ENCODE measurements at regions of chr5 and their contacts with region 1.

Region 1: DNA sequence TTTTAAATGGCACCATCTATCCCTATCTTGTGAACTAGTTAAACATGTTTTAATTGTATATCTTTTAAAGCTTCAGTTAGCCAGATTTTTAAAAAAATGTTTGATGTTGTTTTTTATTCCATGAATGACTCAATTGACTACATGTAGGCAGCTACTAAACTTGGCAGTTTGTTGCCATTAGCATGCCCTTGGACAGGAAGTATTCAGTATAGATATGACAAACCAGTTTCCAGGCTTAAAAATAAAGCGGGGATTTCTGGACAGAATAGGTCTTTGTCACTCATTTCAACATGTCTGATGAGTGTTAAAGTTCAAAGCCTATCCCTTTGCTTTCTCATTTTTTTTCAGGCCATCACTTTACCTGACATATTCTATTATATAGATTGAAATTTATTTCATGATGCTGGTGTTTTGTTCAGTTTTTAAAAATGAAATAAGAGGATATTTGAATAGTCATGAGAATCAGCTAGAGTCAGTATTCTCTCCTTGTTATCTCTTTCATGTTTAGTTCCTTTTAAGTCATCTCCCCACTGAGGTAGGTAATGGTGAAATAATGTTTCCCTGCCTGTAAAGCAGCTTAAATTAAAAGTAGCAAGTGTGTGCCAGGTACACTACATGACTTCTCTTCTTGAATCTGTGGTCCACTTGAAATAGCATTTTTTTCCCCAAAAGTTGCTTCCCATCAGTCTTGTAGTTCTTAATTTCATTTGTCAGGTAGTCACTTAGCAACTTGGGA is 11.9 kb downstream of the TNFAIP8 start:
- DNase-seq: no peak
- ATAC-seq: peak; percentile 61
- H3K4me3 Mint-ChIP-seq: peak overlapping the region; percentile 40
- H3K27ac Mint-ChIP-seq: peak overlapping the region; percentile 88
- H3K4me1 Mint-ChIP-seq: peaks cover 83% of the 10 kb centered on the region
- H3K27me3 Mint-ChIP-seq: no peaks in the 10 kb centered on the region

Region 2: DNA sequence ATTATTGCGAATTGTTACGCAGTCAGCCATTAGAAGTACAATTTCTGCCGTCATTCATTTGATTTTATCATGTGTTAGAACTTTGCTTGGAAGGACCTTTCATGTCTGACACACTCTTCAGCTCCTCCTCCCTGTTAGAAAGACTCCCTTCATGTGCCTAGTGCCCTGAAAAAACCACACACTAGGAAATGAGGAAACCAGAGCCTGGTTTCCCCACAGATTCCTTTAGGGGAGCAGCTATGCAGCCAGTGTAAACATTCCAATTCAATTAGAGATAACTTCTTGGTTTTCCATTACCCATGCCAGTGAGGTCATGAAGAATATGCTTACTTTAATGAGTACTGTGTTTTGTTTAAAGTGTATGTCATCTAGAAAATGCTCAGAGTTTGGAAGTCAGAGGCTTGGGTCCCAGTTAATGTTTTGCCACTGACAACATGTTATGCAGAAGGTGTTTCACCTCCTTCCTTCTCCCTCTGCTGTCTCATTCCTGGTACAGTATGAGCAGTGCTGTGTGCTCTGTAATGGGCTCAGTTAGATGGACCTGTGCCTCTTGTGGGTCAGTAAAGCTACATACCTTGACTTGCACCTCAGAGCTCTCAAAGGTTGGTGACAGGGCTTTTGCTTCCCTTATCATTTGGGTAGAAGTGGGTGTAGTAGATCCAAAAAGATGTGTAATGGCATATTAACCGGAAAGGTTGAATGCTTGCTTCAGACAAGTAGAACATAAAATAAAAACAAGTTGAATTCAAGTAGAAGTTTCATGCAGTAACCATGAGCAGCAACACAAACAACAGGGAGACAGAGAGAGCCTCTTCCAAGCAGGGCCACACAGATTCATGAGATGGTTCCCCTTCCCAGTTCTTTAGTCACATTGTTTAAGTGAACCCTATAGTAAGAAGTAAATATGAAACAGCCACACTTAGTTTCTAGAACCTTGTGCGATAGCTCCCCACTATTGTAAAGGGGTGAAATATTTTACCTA is 64.5 kb before region 1 on chr5:
- CTCF ChIA-PET with region 1: no interaction called
- POLR2A ChIA-PET with region 1: no interaction called
- DNase-seq: peak; percentile 19
- ATAC-seq: peak; percentile 44
- H3K4me3 Mint-ChIP-seq: no peak overlapping the region
- H3K27ac Mint-ChIP-seq: peak overlapping the region; percentile 73
- H3K4me1 Mint-ChIP-seq: peaks cover 95% of the 10 kb centered on the region
- H3K27me3 Mint-ChIP-seq: no peaks in the 10 kb centered on the region

Region 3: DNA sequence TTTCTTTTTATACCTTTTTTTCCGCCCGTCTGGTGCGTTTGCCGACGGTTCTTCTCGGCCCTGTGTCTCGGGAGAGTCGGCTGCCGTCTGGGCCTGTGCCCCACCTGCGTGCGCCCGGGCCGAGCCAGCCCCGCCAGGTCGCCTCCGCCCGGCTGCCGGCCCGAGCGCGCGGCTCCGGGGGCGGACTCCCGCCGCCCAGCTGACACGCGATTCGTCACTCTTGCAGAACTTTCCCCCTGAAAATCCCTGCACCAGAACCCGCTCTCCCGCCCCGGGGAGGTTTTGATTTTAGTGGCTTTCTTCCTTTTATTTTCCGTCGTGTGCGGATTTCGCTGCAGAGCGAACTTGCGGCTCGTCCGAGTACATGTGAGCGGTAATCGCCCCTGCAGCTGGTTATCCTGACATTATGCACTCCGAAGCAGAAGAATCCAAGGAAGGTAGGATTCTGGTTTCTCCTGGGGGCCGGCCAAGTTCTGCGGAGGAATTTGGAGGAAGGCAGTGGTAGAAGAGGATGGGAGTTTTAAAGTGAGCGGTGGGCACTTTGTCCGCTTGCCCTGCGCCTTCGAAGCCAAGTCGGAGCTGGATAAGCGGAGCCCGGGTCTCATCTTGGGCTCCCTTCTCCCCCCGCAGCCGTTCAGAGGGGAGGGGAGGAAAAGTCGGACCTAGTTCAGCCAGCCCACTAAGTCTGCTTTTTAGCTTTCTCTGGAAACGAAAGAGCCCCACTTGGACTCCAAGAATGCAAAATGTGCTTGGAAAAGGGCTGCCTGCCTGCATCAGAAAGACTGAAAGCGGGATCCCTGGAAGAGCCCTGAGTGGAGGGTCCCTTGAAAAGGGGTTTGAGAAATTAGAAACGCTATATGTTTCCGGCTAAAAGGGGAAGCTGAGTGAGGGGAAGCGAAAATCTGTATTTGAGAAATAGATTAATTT is 11.7 kb before region 1 on chr5 and contains the start of gene TNFAIP8:
- CTCF ChIA-PET with region 1: interaction called, 15 read pairs
- POLR2A ChIA-PET with region 1: interaction called, 15 read pairs
- DNase-seq: peak; percentile 53
- ATAC-seq: peak; percentile 69
- H3K4me3 Mint-ChIP-seq: peak within 1 kb of the TSS; percentile 83
- H3K27ac Mint-ChIP-seq: peak within 1 kb of the TSS; percentile 88
- H3K4me1 Mint-ChIP-seq: peaks cover 88% of the 10 kb centered on the region
- H3K27me3 Mint-ChIP-seq: no peaks in the 10 kb centered on the region
- total RNA-seq, gene TNFAIP8: 123 to 127 TPM

Region 4: GRCh38 chr5:119378075-119378700 is 10.5 kb after region 1 on chr5:
- CTCF ChIA-PET with region 1: interaction called, 7 read pairs
- POLR2A ChIA-PET with region 1: interaction called, 11 read pairs
- DNase-seq: no peak
- ATAC-seq: peak; percentile 58
- H3K4me3 Mint-ChIP-seq: peak overlapping the region; percentile 34
- H3K27ac Mint-ChIP-seq: peak overlapping the region; percentile 73
- H3K4me1 Mint-ChIP-seq: peaks cover 64% of the 10 kb centered on the region
- H3K27me3 Mint-ChIP-seq: no peaks in the 10 kb centered on the region

Region 5: GRCh38 chr5:119515192-119515591 is 147.5 kb after region 1 on chr5:
- CTCF ChIA-PET with region 1: no interaction called
- POLR2A ChIA-PET with region 1: no interaction called
- DNase-seq: no peak
- ATAC-seq: no peak
- H3K4me3 Mint-ChIP-seq: no peak overlapping the region
- H3K27ac Mint-ChIP-seq: no peak overlapping the region
- H3K4me1 Mint-ChIP-seq: no peaks in the 10 kb centered on the region
- H3K27me3 Mint-ChIP-seq: no peaks in the 10 kb centered on the region

Measured in activated CD8-positive, alpha-beta T cell treated with anti-CD3 and anti-CD28 coated beads, Interleukin-2, amount 10 ng/mL, durations not matched to agents 7 days and 5 days (primary cell).